Right ventricle myocardium superior (tissue), 1 donor: ENCODE measurements at regions of chr1 and their contacts with region 1.

Region 1: DNA sequence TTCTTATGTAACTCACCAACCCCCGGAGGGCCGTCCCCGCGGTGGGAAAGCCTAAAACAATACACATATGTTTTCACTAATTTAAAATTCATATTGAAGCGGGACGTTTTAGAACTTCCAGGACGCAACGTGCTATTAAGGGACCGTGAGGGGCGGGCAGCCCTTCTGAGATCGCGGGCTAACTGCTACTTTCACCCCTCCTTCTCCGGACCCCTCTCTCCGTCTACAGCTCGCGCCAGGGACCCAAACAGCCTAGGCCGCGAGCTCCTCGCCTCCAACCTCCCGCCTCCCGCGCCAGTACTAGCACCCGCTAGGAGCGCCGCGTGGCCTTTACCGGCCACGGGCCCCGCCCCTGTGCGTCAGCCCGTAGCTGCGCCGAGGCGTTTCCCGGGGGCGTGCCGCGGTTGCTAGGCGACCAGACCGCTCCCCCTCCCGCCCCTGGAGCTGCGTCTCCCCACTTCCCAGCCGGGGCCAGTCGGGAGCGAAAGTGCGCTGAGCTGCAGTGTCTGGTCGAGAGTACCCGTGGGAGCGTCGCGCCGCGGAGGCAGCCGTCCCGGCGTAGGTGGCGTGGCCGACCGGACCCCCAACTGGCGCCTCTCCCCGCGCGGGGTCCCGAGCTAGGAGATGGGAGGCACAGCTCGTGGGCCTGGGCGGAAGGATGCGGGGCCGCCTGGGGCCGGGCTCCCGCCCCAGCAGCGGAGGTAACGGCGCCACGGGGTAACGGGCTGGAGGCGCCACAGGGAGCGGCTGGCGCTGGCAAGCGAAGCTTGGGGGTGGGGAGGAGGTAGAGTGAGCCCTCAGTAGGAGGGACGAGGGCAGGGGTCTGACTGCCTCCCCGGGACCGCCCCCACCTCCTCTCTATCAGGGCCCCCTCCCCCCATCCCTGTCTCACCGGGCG is at the start of gene DYRK3:
- DNase-seq: peak; percentile 97
- ATAC-seq: peak; percentile 99
- total RNA-seq, gene DYRK3: 23.6 TPM

Region 2: DNA sequence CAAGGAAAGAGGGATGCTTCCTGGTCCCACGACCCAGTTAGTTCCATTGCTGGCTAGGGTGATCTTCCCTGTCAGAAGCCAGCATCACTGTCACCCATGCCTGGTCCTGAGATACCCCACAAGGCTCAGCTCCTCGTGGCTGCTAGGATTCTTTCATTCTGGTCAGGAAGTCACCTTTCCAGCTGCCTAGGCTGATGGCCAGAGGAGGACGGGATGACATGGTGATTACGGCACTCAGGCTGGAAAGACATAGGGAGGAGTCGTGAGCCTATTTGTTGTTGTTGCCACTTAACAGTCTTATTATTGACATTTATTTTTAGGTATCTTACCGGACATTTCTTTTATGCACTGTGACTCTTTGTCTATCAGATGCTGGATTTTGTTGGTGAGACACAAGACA is 29.4 kb after region 1 on chr1:
- intact Hi-C with region 1: loop called (anchors 5 kb)
- DNase-seq: peak; percentile 52
- ATAC-seq: peak; percentile 68

Region 3: DNA sequence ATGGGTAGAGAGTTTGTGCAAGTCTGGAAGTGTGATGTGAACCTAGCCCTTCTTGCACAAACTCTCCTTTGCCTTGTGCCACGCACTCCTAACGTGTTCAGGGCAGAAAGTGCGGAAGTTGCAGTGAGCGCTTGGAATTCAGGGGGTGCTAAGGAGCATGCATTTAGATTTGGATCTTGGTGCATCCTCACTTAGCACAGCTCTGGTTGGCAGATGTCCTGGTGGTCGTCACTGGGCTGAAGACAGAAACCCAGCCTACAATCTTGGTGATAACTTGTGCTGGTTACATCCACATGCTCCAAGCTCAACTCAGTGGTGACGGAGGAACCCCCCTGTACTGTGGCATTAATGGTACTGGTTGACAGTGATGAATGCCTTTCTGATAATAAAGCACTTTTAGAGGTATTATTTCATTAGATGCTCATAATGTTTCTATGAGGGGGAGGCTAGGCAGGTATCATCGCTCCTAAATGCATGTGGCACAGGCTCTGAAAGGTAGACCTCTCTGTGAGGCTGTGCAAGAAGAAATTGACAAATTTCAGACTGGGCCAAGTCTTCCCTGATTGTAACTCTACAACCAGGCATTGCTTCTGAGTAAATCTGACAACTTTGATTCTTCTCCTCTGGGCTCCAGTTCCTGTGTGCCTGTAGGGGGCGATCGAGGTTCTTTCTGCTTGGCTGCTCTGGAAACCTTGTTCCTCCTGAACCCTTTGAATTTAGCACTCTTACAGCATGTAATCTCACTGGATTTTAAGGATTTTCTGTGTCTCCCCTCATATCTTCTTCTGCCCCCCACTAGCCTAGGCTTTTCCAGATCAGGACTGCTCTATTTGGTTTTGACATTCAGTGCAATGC is 90.0 kb after region 1 on chr1:
- intact Hi-C with region 1: loop called (anchors 10 kb)
- DNase-seq: no peak
- ATAC-seq: peak; percentile 9

Region 4: DNA sequence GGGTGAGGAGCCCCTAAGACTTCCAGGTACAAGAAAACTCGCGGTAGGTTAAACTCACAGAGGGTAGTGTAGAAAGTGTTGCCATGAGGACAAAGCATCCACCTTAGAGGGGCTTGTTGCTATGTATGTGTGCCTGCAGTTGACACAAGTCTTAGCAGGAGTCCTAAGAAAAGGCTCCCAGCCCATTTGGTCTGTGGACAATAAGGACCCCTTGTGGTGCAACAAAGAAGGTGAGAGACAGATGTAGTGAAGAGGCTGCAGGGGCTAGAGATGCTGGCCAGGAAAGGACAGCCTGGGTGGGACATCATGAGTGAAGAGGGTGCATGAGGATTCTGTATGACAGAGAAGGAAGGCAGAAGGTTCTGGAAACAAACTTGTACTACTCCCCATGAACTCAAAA is 173.3 kb after region 1 on chr1:
- intact Hi-C with region 1: loop called (anchors 2 kb)
- DNase-seq: no peak
- ATAC-seq: peak; percentile 81

Region 5: GRCh38 chr1:206912445-206913095 is 277.2 kb after region 1 on chr1:
- intact Hi-C with region 1: loop called (anchors 5 kb)
- DNase-seq: peak; percentile 62
- ATAC-seq: peak; percentile 76